Dorsolateral prefrontal cortex (tissue), 120 donors: ENCODE measurements at regions of chr14 and their contacts with region 1.

Region 1: GRCh38 chr14:22829661-22830442 is at the start of gene MRPL52:
- DNase-seq: peak; percentile 78 to 93 (median 89)
- H3K4me3 ChIP-seq: peak within 1 kb of the TSS; percentile 70 to 100 (median 92)
- H3K27ac ChIP-seq: peak within 1 kb of the TSS in 57 of 59 donors; percentile 10 to 92 (median 81)
- H3K27me3 ChIP-seq: peaks cover 0 to 15% (median 0%) of the 10 kb centered on the region in 45 donors
- CTCF ChIP-seq: peak in 41 of 56 donors; percentile 5 to 64 (median 37)
- total RNA-seq, gene MRPL52: 37.4 to 83.2 (median 56.3) TPM

Region 2: GRCh38 chr14:22589096-22589839 is 240.6 kb before region 1 on chr14 and contains the start of gene DAD1:
- intact Hi-C with region 1: loop called (anchors 5 to 10 kb)
- DNase-seq: peak; percentile 91 to 98 (median 95)
- H3K4me3 ChIP-seq: peak within 1 kb of the TSS; percentile 47 to 99 (median 86)
- H3K27ac ChIP-seq: peak within 1 kb of the TSS; percentile 24 to 94 (median 84)
- H3K27me3 ChIP-seq: no peaks in the 10 kb centered on the region
- CTCF ChIP-seq: peak in 19 of 56 donors; percentile 6 to 44 (median 26)
- total RNA-seq, gene DAD1: 71.6 to 171 (median 110) TPM

Region 3: DNA sequence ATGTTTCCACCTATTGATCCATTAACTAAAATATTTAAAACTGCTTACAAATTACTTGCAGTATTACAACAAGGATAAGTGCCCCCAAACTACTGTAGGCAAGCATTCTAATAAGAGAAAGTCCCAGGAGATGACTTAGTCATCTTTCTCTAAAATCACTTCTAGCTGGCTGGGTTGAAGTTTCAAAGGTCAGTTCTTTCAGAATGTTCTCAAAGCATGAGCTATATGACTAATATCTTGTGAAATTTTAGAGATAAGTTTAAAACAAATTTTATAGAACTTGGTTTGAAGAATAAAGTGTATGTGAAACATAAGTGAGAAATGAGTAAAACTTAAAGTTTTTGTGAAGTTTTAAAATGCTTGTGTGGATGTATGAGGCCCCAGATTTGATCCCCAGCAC is 161.4 kb before region 1 on chr14:
- intact Hi-C with region 1: no loop called
- DNase-seq: no peak
- H3K4me3 ChIP-seq: no peak overlapping the region
- H3K27ac ChIP-seq: no peak overlapping the region
- H3K27me3 ChIP-seq: no peaks in the 10 kb centered on the region
- CTCF ChIP-seq: no peak